ENCODE measurements at regions of chr11 and their contacts with region 1.

Region 1: GRCh38 chr11:119218141-119218878 is 12.2 kb downstream of the CBL start:
- DNase-seq: no peak
- H3K4me3 ChIP-seq: no peak overlapping the region
- H3K27ac ChIP-seq: no peak overlapping the region
- H3K4me1 ChIP-seq: no peaks in the 10 kb centered on the region
- H3K27me3 ChIP-seq: no peaks in the 10 kb centered on the region
- CTCF ChIP-seq: no peak
- EP300 ChIP-seq: no peak
- POLR2A ChIP-seq: no peak

Region 2: GRCh38 chr11:117327567-117328374 is 1890.5 kb before region 1 on chr11 and contains the start of gene CEP164:
- intact Hi-C with region 1: no loop called
- DNase-seq: peak; percentile 94 to 97 (median 94)
- H3K4me3 ChIP-seq: peak within 1 kb of the TSS; percentile 90
- H3K27ac ChIP-seq: peak within 1 kb of the TSS; percentile 79 to 82
- H3K4me1 ChIP-seq: peaks cover 4% of the 10 kb centered on the region
- H3K27me3 ChIP-seq: no peaks in the 10 kb centered on the region
- CTCF ChIP-seq: no peak
- EP300 ChIP-seq: no peak
- POLR2A ChIP-seq: peak; percentile 66
- total RNA-seq, gene CEP164: 21.0 to 50.4 (median 32.9) TPM

Region 3: GRCh38 chr11:119095066-119095880 is 123.0 kb before region 1 on chr11:
- intact Hi-C with region 1: no loop called
- DNase-seq: peak; percentile 98 to 99 (median 99)
- H3K4me3 ChIP-seq: peak overlapping the region; percentile 92
- H3K27ac ChIP-seq: peak overlapping the region; percentile 80 to 96
- H3K4me1 ChIP-seq: peaks cover 2% of the 10 kb centered on the region
- H3K27me3 ChIP-seq: no peaks in the 10 kb centered on the region
- CTCF ChIP-seq: peak in 2 of 3 donors; percentile 70 to 85
- EP300 ChIP-seq: no peak
- POLR2A ChIP-seq: peak; percentile 99

Region 4: GRCh38 chr11:119284344-119285157 is 66.2 kb after region 1 on chr11:
- intact Hi-C with region 1: loop called in 1 of 4 experiments (anchors 10 kb)
- DNase-seq: no peak
- H3K4me3 ChIP-seq: no peak overlapping the region
- H3K27ac ChIP-seq: no peak overlapping the region
- H3K4me1 ChIP-seq: no peaks in the 10 kb centered on the region
- H3K27me3 ChIP-seq: no peaks in the 10 kb centered on the region
- CTCF ChIP-seq: no peak
- EP300 ChIP-seq: no peak
- POLR2A ChIP-seq: no peak

Region 5: DNA sequence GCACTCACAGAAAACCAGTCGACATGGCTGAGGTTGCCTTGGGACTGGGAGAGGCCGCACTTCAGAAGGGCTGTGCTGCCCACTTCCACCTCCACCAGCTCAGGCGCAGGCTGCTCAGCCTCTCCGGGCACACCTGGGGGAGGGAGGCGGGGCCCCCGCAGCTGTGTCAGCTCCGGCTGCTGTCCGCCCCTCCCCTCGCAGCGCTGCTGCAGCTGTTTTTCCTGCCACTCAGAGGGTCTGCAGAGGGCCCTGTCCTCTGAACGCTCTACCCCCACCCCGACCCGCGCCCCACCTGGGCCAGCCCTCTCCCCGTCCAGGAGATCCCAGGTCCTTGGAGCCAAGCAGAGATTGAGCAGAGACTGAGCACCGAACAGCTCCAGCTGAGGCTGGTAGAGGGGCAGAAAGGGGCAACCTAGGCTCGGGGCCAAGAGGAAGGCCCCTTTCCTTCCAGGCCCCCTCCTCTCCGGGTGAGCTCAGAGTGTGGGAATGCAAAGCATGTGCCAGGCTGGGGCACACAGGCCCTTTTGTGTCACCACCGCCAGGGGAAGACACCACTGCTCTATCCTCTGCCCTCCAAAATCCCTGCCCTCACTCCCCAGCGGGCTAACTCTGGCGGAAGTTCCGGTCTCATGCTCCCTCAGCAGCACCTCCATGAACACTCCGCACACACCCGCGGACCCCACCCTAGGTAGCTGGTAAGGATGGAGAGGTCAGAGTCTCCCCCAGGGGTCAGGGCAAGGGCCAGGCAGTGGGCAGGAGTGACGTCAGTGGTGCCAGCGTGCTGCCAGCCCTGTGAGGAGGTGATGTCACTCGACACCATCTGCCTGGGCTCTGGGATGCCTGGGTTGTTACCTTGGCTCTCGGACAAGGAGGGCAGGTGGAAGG is 97.1 kb after region 1 on chr11:
- intact Hi-C with region 1: loop called in 1 of 4 experiments (anchors 10 kb)
- DNase-seq: peak in 1 of 5 donors; percentile 39
- H3K4me3 ChIP-seq: peak overlapping the region; percentile 51
- H3K27ac ChIP-seq: peak overlapping the region; percentile 32 to 40
- H3K4me1 ChIP-seq: peaks cover 10% of the 10 kb centered on the region
- H3K27me3 ChIP-seq: no peaks in the 10 kb centered on the region
- CTCF ChIP-seq: no peak
- EP300 ChIP-seq: no peak
- POLR2A ChIP-seq: no peak

Measured in ovary (tissue), 10 donors.